HepG2 (cell line): ENCODE measurements at regions of chr14 and their contacts with region 1.

Region 1: DNA sequence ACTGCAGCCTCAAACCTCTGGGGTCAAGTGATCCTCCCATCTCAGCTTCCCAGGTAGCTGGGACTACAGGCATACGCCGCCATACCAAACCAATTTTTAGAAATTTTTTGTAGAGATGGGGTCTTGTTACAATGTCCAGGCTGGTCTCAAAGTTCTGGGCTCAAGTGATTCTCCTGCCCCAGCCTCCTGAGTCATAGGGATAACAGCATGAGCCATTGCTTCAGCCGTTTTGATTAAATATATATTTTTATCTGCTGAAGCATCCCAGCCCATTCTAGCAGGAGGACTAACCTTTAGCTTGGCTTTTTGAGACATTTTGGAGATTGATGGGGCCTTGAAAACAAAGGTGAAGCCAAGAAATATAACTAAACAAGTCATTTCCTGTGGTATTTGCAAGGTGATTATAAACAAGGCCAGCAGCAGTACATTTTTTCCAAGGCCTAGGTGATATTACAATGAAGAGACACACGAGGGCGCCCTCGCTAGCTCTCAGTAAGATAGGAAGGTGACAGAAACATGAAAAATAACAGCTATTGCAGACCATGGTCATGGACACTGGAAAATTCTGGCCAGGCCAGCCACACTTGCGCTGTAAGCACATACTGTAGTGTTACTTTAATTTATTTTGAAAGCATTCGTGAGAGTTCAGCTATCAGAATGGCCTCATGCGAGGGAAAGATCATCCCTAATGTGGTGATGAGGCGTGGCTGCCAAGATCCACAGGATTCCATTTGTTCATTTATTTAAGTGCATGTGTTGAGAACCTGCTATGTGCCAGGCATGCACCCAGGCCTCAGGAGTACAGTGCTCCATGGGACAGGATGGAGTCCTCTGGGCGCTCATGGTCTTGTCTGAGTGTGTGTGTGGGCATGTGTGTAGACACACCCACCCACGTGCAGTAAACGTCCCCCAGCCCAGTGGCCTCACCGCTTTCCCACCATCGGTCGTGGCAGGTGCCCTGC is 63.5 kb downstream of the DGLUCY start:
- DNase-seq: peak; percentile 48
- ATAC-seq: peak; percentile 76
- H3K4me3 ChIP-seq: no peak overlapping the region
- H3K27ac ChIP-seq: no peak overlapping the region
- H3K4me1 ChIP-seq: no peaks in the 10 kb centered on the region
- H3K27me3 ChIP-seq: no peaks in the 10 kb centered on the region
- CTCF ChIP-seq: peak; percentile 78
- EP300 ChIP-seq: no peak
- POLR2A ChIP-seq: no peak
- RAD21 ChIP-seq: peak; percentile 22; the same call in 1 of the 2 replicates

Region 2: GRCh38 chr14:90903101-90903500 is 274.3 kb before region 1 on chr14:
- CTCF ChIA-PET with region 1: interaction called, 19 read pairs
- POLR2A ChIA-PET with region 1: no interaction called
- in situ Hi-C with region 1: loop called (anchors 5 kb)
- intact Hi-C with region 1: loop called (anchors 1 kb)
- DNase-seq: peak; percentile 40
- ATAC-seq: peak; percentile 82
- H3K4me3 ChIP-seq: no peak overlapping the region
- H3K27ac ChIP-seq: no peak overlapping the region
- H3K4me1 ChIP-seq: no peaks in the 10 kb centered on the region
- H3K27me3 ChIP-seq: no peaks in the 10 kb centered on the region
- CTCF ChIP-seq: peak; percentile 73
- EP300 ChIP-seq: no peak
- POLR2A ChIP-seq: no peak
- RAD21 ChIP-seq: no peak

Region 3: GRCh38 chr14:91060351-91061055 is 116.9 kb before region 1 on chr14 and contains the start of gene RPS6KA5:
- CTCF ChIA-PET with region 1: no interaction called
- POLR2A ChIA-PET with region 1: no interaction called
- in situ Hi-C with region 1: no loop called
- intact Hi-C with region 1: loop called (anchors 10 kb)
- DNase-seq: peak; percentile 100
- ATAC-seq: peak; percentile 95
- H3K4me3 ChIP-seq: peak within 1 kb of the TSS; percentile 65 to 81 (median 80)
- H3K27ac ChIP-seq: peak within 1 kb of the TSS; percentile 93
- H3K4me1 ChIP-seq: peaks cover 44% of the 10 kb centered on the region
- H3K27me3 ChIP-seq: no peaks in the 10 kb centered on the region
- CTCF ChIP-seq: peak; percentile 16; the same call in 1 of the 2 replicates
- EP300 ChIP-seq: peak in 1 of 2 experiments; percentile 40; a peak in 1 of 4 replicates
- POLR2A ChIP-seq: peak in 1 of 2 experiments; percentile 61; a peak in 1 of 4 replicates
- RAD21 ChIP-seq: peak; percentile 71
- total RNA-seq, gene RPS6KA5: 0.58 and 0.65 TPM in 2 replicates

Region 4: GRCh38 chr14:91119556-91120311 is 57.6 kb before region 1 on chr14:
- CTCF ChIA-PET with region 1: no interaction called
- POLR2A ChIA-PET with region 1: no interaction called
- in situ Hi-C with region 1: no loop called
- intact Hi-C with region 1: no loop called
- DNase-seq: no peak
- ATAC-seq: no peak
- H3K4me3 ChIP-seq: no peak overlapping the region
- H3K27ac ChIP-seq: no peak overlapping the region
- H3K4me1 ChIP-seq: peaks cover 52% of the 10 kb centered on the region
- H3K27me3 ChIP-seq: no peaks in the 10 kb centered on the region; a peak in 1 of 5 replicates
- CTCF ChIP-seq: no peak
- EP300 ChIP-seq: no peak
- POLR2A ChIP-seq: no peak
- RAD21 ChIP-seq: no peak

Region 5: DNA sequence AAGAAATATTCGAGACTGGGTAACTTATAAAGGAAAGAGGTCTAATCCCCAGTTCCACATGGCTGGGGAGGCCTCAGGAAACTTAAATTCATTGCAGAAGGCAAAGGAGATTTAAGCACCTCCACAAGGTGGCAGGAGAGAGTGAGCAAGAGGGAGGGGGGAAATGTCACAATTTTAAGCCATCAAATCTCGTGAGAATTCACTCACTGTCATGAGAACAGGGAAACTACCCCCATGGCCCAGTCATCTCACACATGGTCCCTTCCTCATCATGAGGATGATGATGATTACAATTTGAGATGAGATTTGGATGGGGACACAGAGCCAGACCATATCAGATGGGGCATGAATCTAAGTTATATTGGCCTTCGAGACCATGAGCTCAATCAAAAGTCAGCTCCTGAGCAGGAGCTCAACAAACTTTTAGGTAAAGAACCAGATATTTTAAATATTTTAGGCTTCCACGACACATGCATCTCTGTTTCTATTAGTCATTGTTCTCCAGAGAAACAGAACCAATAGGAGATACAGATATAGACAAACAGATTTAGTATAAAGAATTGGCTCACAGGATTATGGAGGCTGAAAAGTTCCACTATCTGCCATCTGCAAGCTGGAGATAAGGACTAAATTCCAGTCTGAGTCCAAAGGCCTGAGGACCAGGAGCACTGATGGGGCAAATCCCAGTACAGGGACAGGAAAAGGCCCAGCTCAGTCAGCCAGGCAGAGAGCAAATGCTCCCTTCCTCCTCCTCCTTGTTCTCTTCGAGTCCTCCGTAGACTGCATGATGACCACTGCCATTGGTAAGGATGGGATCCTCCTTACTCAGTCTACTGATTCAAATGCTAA is 38.6 kb before region 1 on chr14:
- CTCF ChIA-PET with region 1: interaction called, 20 read pairs
- POLR2A ChIA-PET with region 1: no interaction called
- in situ Hi-C with region 1: no loop called
- intact Hi-C with region 1: loop called (anchors 1 kb)
- DNase-seq: peak; percentile 40
- ATAC-seq: peak; percentile 72
- H3K4me3 ChIP-seq: no peak overlapping the region
- H3K27ac ChIP-seq: no peak overlapping the region
- H3K4me1 ChIP-seq: peaks cover 22% of the 10 kb centered on the region
- H3K27me3 ChIP-seq: no peaks in the 10 kb centered on the region
- CTCF ChIP-seq: peak; percentile 55
- EP300 ChIP-seq: no peak
- POLR2A ChIP-seq: no peak
- RAD21 ChIP-seq: no peak

Region 6: GRCh38 chr14:91286530-91286937 is 109.2 kb after region 1 on chr14:
- CTCF ChIA-PET with region 1: interaction called, 29 read pairs
- POLR2A ChIA-PET with region 1: no interaction called
- in situ Hi-C with region 1: loop called (anchors 5 kb)
- intact Hi-C with region 1: no loop called
- DNase-seq: peak; percentile 58
- ATAC-seq: peak; percentile 97
- H3K4me3 ChIP-seq: no peak overlapping the region
- H3K27ac ChIP-seq: no peak overlapping the region
- H3K4me1 ChIP-seq: no peaks in the 10 kb centered on the region
- H3K27me3 ChIP-seq: no peaks in the 10 kb centered on the region
- CTCF ChIP-seq: peak; percentile 87
- EP300 ChIP-seq: no peak
- POLR2A ChIP-seq: no peak
- RAD21 ChIP-seq: peak; percentile 53; the same call in 1 of the 2 replicates

Region 7: DNA sequence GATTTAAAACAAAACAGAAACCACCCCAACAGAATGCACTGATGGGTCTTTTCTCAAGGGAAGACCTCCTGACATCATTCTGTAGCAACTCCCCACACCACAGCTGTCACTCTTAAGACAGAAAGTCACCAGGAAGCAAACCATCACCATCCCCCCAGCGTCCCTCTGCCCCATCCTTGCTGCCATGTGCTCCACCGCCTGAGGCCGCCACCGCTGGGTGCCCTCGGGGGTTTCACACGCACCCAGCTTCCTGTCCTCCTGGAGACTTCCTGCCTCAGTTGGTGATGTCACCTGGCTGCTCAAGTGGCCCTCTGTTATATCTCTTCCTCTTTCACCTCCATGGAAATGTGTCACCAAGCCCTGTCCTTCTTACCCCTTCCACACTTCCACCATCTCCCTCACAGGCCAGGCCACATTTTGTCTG is 138.5 kb after region 1 on chr14:
- CTCF ChIA-PET with region 1: no interaction called
- POLR2A ChIA-PET with region 1: no interaction called
- in situ Hi-C with region 1: no loop called
- intact Hi-C with region 1: no loop called
- DNase-seq: no peak
- ATAC-seq: no peak
- H3K4me3 ChIP-seq: no peak overlapping the region
- H3K27ac ChIP-seq: no peak overlapping the region
- H3K4me1 ChIP-seq: no peaks in the 10 kb centered on the region
- H3K27me3 ChIP-seq: no peaks in the 10 kb centered on the region
- CTCF ChIP-seq: no peak
- EP300 ChIP-seq: no peak
- POLR2A ChIP-seq: no peak
- RAD21 ChIP-seq: no peak